Motor neuron (in vitro differentiated cells): ENCODE measurements at regions of chr15 and their contacts with region 1.

Region 1: GRCh38 chr15:95470997-95471689 is 859.4 kb upstream of the NR2F2 start:
- ATAC-seq: no peak
- H3K4me3 ChIP-seq: no peak overlapping the region
- H3K27ac ChIP-seq: no peak overlapping the region
- H3K4me1 ChIP-seq: peaks cover 3 to 15% of the 10 kb centered on the region in 2 donors

Region 2: GRCh38 chr15:96321639-96322535 is 850.7 kb after region 1 on chr15:
- in situ Hi-C with region 1: loop called in 1 of 9 experiments (anchors 25 kb)
- ATAC-seq: peak; percentile 48 to 60 (median 54)
- H3K4me3 ChIP-seq: peak overlapping the region; percentile 26 to 34 (median 32)
- H3K27ac ChIP-seq: peak overlapping the region; percentile 62 to 75
- H3K4me1 ChIP-seq: peaks cover 33 to 34% of the 10 kb centered on the region in 2 donors